Dorsolateral prefrontal cortex (tissue), 120 donors: ENCODE measurements at regions of chr1 and their contacts with region 1.

Region 1: GRCh38 chr1:181142096-181142958 is 53.8 kb downstream of the IER5 start:
- DNase-seq: peak; percentile 88 to 95 (median 94)
- H3K4me3 ChIP-seq: peak overlapping the region; percentile 12 to 69 (median 47)
- H3K27ac ChIP-seq: peak overlapping the region in 58 of 59 donors; percentile 17 to 93 (median 77)
- H3K27me3 ChIP-seq: no peaks in the 10 kb centered on the region
- CTCF ChIP-seq: peak; percentile 92 to 100 (median 98)

Region 2: DNA sequence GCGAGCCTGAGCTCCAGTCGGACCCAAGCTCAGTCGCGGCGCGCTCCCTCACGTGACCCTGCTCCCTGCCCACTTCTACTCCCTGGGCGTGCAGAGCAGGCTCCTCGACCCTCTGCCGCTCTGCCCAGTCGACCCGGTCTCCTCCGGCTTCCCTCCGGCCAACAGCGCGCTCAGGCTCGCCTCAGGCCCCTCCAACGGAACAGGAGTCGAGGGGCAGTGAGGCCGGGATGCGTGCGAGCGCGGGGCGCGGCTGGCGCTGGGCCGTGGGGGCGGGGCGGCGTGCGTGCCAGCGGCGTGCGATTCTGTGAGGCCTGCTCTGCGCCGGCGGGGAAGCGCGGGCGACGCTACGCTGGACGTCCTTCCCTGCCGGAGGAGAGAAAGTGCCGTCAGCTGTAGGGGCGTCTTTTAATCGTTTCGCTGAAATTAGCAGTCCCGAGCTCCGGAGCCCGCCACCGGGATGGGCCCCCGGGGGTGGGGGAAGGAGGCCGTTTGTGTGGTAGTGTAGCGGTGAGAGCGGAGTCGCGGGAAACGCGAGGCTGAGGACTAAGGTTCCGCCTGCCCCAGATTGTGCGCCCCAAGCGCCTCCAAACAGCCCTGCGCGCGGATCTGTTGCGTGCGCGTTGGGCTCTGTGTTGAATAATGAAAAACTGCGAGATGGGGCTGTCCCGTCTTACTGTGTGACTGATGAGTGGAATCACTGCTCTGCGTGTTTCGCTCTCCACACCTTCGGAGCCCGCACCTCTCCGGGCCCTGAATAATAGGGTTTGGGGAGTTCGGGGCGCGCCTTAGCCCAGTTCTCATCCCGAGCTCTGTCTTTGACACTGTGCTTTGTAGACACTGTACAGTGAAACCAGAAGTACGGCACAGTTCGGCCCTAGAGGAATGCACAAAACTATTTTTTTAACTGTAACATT is 639.7 kb before region 1 on chr1 and contains the start of gene ACBD6:
- intact Hi-C with region 1: loop called in 1 of 2 experiments (anchors 10 kb)
- DNase-seq: peak; percentile 71 to 91 (median 82)
- H3K4me3 ChIP-seq: peak within 1 kb of the TSS; percentile 66 to 100 (median 91)
- H3K27ac ChIP-seq: peak within 1 kb of the TSS; percentile 73 to 98 (median 93)
- H3K27me3 ChIP-seq: no peaks in the 10 kb centered on the region
- CTCF ChIP-seq: peak in 37 of 56 donors; percentile 6 to 50 (median 26)
- total RNA-seq, gene ACBD6: 31.2 to 64.0 (median 43.3) TPM

Region 3: DNA sequence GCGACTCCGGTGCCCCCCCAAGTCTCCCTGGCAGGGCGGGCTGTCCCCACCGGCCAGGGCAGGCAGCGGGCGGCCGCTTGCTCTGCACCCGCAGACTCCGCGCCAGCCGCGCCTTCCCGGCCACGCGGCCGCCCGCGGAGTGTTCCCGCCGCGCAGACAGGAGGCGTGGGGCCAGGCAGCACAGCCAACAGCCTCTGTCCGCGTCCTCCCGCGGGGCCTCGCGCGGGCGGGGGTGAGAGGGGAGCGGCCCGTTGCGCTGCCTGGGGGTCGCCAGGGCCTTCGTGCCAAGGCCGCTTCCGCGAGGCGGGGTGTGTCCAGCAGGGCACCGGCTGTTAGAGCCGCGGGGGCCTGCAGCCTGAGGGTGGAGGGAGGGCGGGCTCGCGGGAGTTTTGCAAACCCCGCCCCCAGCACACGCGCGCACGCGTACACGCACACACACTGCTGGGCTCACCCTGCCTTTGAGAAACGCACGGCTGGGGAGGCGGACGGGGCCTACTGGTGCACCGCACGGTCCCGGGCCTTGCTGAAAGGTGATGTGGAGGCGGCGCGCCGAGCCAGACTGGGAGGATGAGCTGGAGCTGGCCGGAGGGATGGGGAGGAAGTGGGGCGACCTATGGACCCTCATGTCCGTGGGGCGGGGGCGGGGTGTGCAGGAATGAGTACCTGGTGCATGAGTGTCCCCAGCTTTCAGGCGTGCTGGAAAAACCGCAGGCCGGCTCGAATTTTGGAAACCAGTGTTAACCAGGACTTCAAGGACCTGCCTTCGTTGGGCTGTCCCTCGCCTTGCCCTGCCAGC is 188.1 kb before region 1 on chr1:
- intact Hi-C with region 1: loop called in 1 of 2 experiments (anchors 10 kb)
- DNase-seq: peak in 9 of 10 donors; percentile 54 to 84 (median 69)
- H3K4me3 ChIP-seq: peak overlapping the region; percentile 35 to 74 (median 63)
- H3K27ac ChIP-seq: peak overlapping the region; percentile 28 to 93 (median 78)
- H3K27me3 ChIP-seq: no peaks in the 10 kb centered on the region
- CTCF ChIP-seq: peak in 36 of 56 donors; percentile 4 to 54 (median 30)

Region 4: DNA sequence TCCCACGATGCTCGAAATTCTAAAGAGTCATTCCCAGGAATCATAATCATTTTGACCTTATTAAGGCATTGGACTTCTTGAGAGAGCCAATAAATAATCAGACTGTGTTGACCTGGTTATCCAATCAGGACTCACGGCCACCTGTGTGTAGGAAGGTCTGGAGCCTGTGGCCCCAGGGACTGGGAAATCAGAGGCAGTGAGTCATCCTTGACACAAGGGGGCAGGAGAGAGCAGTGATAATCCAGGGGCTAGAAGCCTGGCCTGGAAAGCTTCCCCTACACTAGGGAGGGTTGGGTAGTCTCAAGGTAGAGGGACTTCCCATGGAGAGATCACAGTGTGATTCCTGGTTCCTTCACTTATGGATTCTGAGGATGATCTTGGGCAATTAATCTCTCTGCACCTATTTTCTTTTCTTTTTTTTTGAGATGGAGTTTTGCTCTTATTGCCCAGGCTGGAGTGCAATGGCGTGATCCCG is 103.9 kb before region 1 on chr1:
- intact Hi-C with region 1: loop called (anchors 1 to 2 kb)
- DNase-seq: peak in 5 of 10 donors; percentile 27 to 68 (median 43)
- H3K4me3 ChIP-seq: no peak overlapping the region
- H3K27ac ChIP-seq: no peak overlapping the region
- H3K27me3 ChIP-seq: no peaks in the 10 kb centered on the region
- CTCF ChIP-seq: peak; percentile 39 to 83 (median 74)

Region 5: GRCh38 chr1:181105134-181106021 is 36.9 kb before region 1 on chr1:
- intact Hi-C with region 1: loop called (anchors 5 kb)
- DNase-seq: peak; percentile 80 to 95 (median 89)
- H3K4me3 ChIP-seq: peak overlapping the region; percentile 58 to 92 (median 81)
- H3K27ac ChIP-seq: peak overlapping the region in 58 of 59 donors; percentile 63 to 97 (median 92)
- H3K27me3 ChIP-seq: no peaks in the 10 kb centered on the region
- CTCF ChIP-seq: peak in 7 of 56 donors; percentile 7 to 20 (median 9)

Region 6: GRCh38 chr1:181525104-181525721 is 382.9 kb after region 1 on chr1:
- intact Hi-C with region 1: no loop called
- DNase-seq: no peak
- H3K4me3 ChIP-seq: no peak overlapping the region
- H3K27ac ChIP-seq: no peak overlapping the region
- H3K27me3 ChIP-seq: no peaks in the 10 kb centered on the region
- CTCF ChIP-seq: no peak